ENCODE measurements at regions of chr2 and their contacts with region 1.

Region 1: GRCh38 chr2:133844214-133844892 is 276.1 kb upstream of the NCKAP5 start:
- DNase-seq: peak; percentile 93
- ATAC-seq: peak; percentile 80
- H3K4me3 ChIP-seq: no peak overlapping the region
- H3K27ac ChIP-seq: peak overlapping the region; percentile 96
- H3K4me1 ChIP-seq: peaks cover 40% of the 10 kb centered on the region
- H3K27me3 ChIP-seq: no peaks in the 10 kb centered on the region
- CTCF ChIP-seq: peak; percentile 98

Region 2: GRCh38 chr2:132267105-132267497 is 1577.3 kb before region 1 on chr2:
- CTCF ChIA-PET with region 1: no interaction called
- POLR2A ChIA-PET with region 1: no interaction called
- intact Hi-C with region 1: loop called (anchors 5 kb)
- DNase-seq: no peak
- ATAC-seq: no peak
- H3K4me3 ChIP-seq: no peak overlapping the region
- H3K27ac ChIP-seq: no peak overlapping the region
- H3K4me1 ChIP-seq: peaks cover 8% of the 10 kb centered on the region; the same call in 1 of the 2 replicates
- H3K27me3 ChIP-seq: no peaks in the 10 kb centered on the region
- CTCF ChIP-seq: no peak

Region 3: GRCh38 chr2:132547074-132547687 is 1297.2 kb before region 1 on chr2:
- CTCF ChIA-PET with region 1: interaction called, 6 read pairs
- POLR2A ChIA-PET with region 1: no interaction called
- intact Hi-C with region 1: loop called (anchors 10 kb)
- DNase-seq: peak; percentile 82
- ATAC-seq: peak; percentile 65
- H3K4me3 ChIP-seq: no peak overlapping the region
- H3K27ac ChIP-seq: no peak overlapping the region
- H3K4me1 ChIP-seq: peaks cover 14% of the 10 kb centered on the region
- H3K27me3 ChIP-seq: no peaks in the 10 kb centered on the region
- CTCF ChIP-seq: peak; percentile 85

Region 4: DNA sequence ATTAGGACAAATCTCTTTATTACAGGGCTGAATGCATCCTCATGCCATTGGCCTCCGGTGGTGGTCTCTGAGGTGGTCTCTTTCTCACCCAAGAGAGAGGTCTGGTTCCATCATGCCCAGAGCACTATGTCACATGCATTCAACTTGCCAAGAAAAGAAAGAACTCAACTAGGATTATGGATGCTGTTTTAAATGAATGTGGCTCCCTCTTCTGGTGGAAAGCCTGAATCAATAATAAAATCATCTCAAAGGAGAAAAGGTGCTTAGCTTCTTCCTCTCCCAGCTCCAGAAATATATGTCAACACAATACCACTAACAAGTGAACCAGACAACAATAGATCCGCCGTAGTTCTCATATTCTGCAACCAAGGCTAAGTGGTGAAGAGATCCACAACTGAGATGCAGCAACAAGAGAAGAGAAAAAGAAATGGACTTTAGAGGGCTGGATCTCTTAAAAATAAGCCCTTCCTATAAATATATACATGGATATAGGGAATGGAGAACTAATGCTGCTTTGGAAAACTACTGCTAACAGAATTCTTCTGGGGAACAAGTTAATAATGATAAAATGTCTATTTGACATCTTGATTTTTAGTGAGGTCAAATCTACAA is 672.9 kb before region 1 on chr2:
- CTCF ChIA-PET with region 1: interaction called, 5 read pairs
- POLR2A ChIA-PET with region 1: no interaction called
- intact Hi-C with region 1: loop called (anchors 2 kb)
- DNase-seq: peak; percentile 84
- ATAC-seq: peak; percentile 56
- H3K4me3 ChIP-seq: no peak overlapping the region
- H3K27ac ChIP-seq: no peak overlapping the region
- H3K4me1 ChIP-seq: peaks cover 11% of the 10 kb centered on the region
- H3K27me3 ChIP-seq: no peaks in the 10 kb centered on the region
- CTCF ChIP-seq: peak; percentile 84

Region 5: DNA sequence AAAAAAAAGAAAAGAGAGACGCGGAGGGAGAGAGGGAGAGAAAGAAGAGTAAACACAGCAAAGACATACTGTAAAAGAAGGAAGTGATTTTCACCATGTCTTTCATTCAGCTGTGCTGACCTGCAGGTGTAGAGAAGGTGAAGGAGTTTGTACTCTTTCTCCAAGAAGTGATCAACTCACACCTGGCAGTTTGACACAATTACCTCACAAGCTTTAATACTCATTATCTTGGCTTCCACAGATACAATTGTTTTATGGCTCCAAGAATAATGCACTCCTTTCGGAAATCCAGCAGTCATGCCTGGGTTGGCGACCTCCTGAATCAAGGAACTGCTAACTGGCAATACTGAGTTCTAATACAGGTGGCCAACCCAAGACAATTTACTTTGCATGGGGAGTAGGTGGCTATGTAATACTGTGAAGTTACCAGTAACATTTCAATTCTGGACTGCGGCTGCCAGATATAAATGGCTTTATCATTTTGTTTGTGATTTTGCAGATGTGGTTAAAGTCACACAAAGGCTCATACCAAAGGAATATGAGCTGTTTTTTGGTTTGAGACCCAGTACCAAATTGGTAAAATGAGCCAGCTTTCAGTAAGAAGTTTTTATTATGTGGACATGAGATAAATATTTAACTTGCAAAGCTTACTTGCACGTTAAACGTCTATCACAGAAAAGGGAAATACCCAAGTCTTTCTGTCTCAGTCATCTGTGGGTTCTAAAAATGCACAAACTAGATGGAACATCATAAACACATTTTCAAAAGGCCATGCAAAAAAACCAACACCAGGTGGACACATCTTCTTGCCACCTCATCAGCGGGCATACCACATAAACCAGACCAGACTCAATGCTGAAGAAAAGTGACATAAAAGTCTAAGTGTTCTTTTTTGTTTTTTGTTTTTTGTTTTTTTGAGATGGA is 345.4 kb before region 1 on chr2:
- CTCF ChIA-PET with region 1: no interaction called
- POLR2A ChIA-PET with region 1: no interaction called
- intact Hi-C with region 1: loop called (anchors 10 kb)
- DNase-seq: no peak
- ATAC-seq: no peak; the same call in 1 of the 2 replicates
- H3K4me3 ChIP-seq: no peak overlapping the region
- H3K27ac ChIP-seq: no peak overlapping the region
- H3K4me1 ChIP-seq: peaks cover 22% of the 10 kb centered on the region
- H3K27me3 ChIP-seq: no peaks in the 10 kb centered on the region
- CTCF ChIP-seq: no peak

Region 6: GRCh38 chr2:133568172-133568571 is 276.2 kb before region 1 on chr2 and contains the start of gene NCKAP5:
- CTCF ChIA-PET with region 1: interaction called, 4 read pairs
- POLR2A ChIA-PET with region 1: no interaction called
- intact Hi-C with region 1: loop called (anchors 2 kb)
- DNase-seq: peak; percentile 59
- ATAC-seq: peak; percentile 59
- H3K4me3 ChIP-seq: peak within 1 kb of the TSS; percentile 69
- H3K27ac ChIP-seq: peak within 1 kb of the TSS; percentile 27
- H3K4me1 ChIP-seq: peaks cover 35% of the 10 kb centered on the region
- H3K27me3 ChIP-seq: no peaks in the 10 kb centered on the region
- CTCF ChIP-seq: no peak; the same call in 1 of the 2 replicates
- total RNA-seq, gene NCKAP5: 3.2 and 4.8 TPM in 2 replicates

Region 7: GRCh38 chr2:133658020-133658903 is 186.1 kb before region 1 on chr2:
- CTCF ChIA-PET with region 1: no interaction called
- POLR2A ChIA-PET with region 1: no interaction called
- intact Hi-C with region 1: no loop called
- DNase-seq: peak; percentile 19
- ATAC-seq: no peak
- H3K4me3 ChIP-seq: no peak overlapping the region
- H3K27ac ChIP-seq: no peak overlapping the region
- H3K4me1 ChIP-seq: no peaks in the 10 kb centered on the region
- H3K27me3 ChIP-seq: no peaks in the 10 kb centered on the region
- CTCF ChIP-seq: no peak

Region 8: GRCh38 chr2:133780099-133780839 is 64.1 kb before region 1 on chr2:
- CTCF ChIA-PET with region 1: interaction called, 14 read pairs
- POLR2A ChIA-PET with region 1: no interaction called
- intact Hi-C with region 1: loop called (anchors 1 kb)
- DNase-seq: peak; percentile 94
- ATAC-seq: peak; percentile 20; the same call in 1 of the 2 replicates
- H3K4me3 ChIP-seq: no peak overlapping the region
- H3K27ac ChIP-seq: no peak overlapping the region
- H3K4me1 ChIP-seq: peaks cover 23% of the 10 kb centered on the region
- H3K27me3 ChIP-seq: no peaks in the 10 kb centered on the region
- CTCF ChIP-seq: peak; percentile 95

Measured in PC-3 (cell line).